MCF 10A (cell line): ENCODE measurements at regions of chr6 and their contacts with region 1.

Region 1: DNA sequence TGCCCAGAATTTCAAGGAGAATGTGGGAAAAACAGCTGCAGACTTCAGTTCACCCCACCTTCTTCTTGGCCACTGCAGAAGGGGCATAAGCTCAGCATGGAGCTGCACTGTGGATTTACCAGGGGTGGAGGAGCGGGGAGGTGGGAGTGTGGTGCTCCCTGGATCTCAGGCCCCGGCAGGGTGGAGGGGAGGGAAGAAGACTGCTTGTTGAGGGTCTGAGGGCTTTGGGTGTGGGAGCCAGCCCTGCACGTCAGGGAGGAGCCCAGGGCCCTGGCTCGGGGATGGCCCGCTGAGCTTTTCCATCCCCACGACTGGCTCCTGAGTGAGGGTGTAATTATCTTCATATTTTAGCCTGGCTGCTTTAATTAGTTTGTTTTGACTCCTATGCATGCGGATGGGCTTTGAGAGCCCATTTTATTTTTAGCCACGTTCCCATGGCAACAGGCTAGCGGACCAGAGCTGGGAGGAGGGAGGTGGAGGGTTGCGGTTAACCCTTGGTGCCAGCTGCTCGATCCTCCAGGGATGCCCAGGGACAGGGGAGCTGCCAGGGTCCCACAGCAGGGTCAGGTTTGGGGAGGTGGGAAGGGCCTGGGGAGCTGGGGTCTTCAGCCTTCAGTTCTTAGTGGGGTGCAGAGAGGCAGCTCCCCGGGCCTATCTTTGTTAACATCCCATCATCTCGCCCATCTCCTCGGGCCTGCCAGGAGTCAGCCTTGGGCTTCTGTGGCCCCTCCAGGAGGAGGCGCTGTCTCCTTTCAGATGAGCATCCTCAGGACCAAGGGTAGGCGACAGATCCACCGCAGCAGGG is 68.2 kb downstream of the RAB44 start:
- DNase-seq: peak; percentile 83
- H3K4me3 Mint-ChIP-seq: no peak overlapping the region
- H3K27ac Mint-ChIP-seq: no peak overlapping the region
- H3K4me1 Mint-ChIP-seq: peaks cover 17% of the 10 kb centered on the region
- H3K27me3 Mint-ChIP-seq: no peaks in the 10 kb centered on the region
- CTCF ChIP-seq: peak; percentile 84

Region 2: DNA sequence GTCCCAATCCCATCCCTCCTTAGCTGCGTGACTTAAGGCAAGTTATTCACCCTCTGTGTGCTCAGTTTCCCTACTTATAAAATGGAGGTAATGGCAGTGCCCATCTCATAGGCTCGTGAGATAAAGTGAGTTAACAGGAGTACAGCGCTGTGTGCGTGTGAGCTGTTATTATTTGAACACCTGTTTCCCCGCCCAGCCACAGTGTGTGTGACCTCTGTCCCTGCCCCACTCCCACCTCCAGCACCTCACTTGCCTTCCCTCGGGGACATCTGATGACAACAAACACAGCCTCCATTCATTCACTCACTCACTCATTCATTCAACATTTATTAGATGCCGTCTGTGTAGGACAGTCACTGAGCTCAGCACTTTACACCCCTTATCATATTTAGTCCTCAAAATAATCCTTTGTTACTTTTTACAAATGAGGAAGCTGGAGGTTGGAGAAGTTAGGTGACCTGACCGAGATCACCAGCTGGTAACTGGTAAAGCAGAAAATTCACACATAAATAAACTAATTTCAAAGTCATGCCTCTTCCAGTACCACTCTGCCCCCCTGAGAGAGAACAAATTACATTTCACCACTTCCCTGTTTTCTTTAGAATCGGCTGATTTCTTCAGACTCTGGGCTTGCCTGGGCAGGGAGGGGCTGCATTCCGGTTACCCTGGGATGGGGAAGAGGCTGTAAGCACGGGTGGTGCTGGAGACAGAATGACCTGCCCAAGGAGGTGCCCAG is 14.8 kb after region 1 on chr6:
- CTCF ChIA-PET with region 1: interaction called, 9 read pairs
- POLR2A ChIA-PET with region 1: no interaction called
- intact Hi-C with region 1: loop called (anchors 1 kb)
- DNase-seq: no peak
- H3K4me3 Mint-ChIP-seq: no peak overlapping the region
- H3K27ac Mint-ChIP-seq: no peak overlapping the region
- H3K4me1 Mint-ChIP-seq: no peaks in the 10 kb centered on the region
- H3K27me3 Mint-ChIP-seq: peaks cover 22% of the 10 kb centered on the region
- CTCF ChIP-seq: no peak

Region 3: DNA sequence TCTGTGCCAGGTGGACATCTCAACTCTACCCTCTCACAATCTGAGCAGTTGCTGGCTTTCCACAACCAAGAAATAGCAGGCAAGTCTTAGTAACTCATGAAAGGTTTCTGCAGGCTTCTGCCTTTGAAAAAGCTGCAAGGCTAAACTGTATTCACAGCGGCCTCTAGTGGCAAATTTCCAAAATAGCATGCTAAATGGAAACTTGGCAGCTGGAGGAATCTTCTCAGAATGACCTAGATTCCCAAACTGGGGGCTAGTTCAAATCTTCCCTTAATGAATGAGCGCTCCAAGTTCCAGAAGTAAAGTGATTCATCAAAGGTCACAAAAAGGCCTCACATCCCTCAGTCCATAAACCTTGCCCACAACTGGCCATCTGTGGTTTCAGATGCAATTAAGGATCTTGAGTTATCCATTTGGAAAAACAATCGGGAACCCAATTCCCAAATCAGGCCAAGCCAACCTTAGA is 85.4 kb after region 1 on chr6:
- CTCF ChIA-PET with region 1: interaction called, 64 read pairs
- POLR2A ChIA-PET with region 1: interaction called, 3 read pairs
- intact Hi-C with region 1: loop called (anchors 1 kb)
- DNase-seq: peak; percentile 74
- H3K4me3 Mint-ChIP-seq: no peak overlapping the region
- H3K27ac Mint-ChIP-seq: no peak overlapping the region
- H3K4me1 Mint-ChIP-seq: peaks cover 17% of the 10 kb centered on the region
- H3K27me3 Mint-ChIP-seq: no peaks in the 10 kb centered on the region
- CTCF ChIP-seq: peak; percentile 83

Region 4: DNA sequence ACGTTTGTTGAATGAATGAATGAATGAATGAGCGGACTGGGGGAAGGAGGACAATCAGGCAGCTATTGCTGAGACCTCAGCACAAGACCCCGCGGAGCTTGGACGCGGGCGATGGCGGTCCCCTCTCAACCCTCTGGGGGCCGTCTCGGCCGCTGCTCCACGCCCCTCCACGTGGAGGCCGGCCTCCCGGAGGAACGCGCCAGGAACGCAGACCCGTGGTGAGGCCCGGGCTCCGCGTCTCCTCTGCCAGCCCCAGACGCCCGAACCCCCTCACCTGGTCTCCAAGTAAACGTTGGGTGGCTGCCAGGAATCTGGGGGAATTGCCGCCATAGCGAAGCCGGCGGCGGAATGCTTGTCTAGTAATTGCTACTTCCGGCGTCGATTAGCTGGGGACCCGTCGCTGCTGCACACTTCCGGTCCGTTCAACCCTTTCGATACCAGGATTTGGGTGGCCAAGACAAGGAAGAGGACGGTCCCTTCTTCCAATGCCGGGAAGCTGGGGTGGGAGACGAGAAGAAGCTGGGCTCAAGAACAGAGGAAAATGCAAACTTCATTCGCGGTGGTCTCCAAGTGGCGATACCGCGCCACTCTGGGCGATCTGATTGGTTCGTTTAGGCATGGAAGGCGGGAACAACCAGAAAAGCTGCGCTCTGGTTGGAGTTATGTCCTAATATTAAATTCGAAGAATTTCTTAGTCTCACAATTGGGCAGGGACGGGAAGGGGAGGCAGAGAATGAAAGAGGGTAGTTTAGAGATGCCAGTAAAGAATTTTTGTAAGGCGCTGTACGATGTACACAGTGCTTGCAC is 108.8 kb after region 1 on chr6 and contains the start of gene PPIL1:
- CTCF ChIA-PET with region 1: interaction called, 4 read pairs
- POLR2A ChIA-PET with region 1: no interaction called
- intact Hi-C with region 1: loop called (anchors 1 kb)
- DNase-seq: peak; percentile 90
- H3K4me3 Mint-ChIP-seq: peak within 1 kb of the TSS; percentile 88
- H3K27ac Mint-ChIP-seq: peak within 1 kb of the TSS; percentile 95
- H3K4me1 Mint-ChIP-seq: peaks cover 14% of the 10 kb centered on the region
- H3K27me3 Mint-ChIP-seq: no peaks in the 10 kb centered on the region
- CTCF ChIP-seq: no peak
- total RNA-seq, gene PPIL1: 53.6 and 54.9 TPM in 2 replicates

Region 5: DNA sequence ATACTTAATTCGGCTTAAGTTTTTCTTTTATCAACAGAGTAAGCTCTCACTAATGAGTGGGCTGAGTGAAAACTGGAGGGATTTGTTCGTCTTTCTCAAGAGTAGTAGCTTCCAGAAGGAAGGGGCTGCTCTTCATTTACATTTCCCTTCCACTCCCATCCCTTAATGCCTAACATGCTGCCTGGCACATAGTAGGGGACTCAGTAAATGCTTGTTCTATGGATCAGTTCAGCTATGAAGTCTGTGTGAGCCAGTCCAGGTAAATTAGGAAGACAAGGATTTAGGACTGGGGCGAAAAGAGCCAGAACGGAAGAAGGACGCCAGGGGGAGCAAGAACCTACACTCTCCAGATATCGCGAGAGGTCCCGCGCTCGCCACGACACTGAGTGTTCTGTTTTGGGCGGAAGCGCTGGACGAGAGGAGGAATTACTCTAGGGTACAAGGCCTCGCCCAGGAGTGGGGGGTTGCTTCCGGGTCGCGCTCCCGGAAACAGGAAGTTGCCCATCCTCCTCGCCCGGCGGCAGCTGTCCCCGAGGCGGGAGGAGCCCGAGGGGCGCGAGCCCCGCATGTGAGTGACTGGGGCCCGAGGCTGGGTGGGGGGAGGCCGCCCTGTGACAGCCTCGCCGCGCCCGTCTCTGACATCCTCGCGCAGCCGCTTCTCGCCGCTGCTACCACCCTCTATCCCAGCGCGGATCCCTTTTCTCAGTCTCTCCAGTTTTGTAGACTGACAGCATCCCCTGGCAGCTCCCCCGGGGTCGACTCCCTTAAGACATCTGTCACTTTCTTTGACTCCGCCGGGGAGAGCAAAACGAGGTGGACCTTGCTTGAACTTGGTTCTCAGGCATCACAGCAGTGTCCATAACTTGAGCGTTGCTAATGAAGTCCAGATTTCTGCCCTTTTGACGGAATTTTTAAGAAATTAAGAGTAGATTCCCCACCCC is 119.9 kb after region 1 on chr6 and contains the start of gene C6orf89:
- CTCF ChIA-PET with region 1: no interaction called
- POLR2A ChIA-PET with region 1: no interaction called
- intact Hi-C with region 1: loop called (anchors 1 kb)
- DNase-seq: peak; percentile 99
- H3K4me3 Mint-ChIP-seq: peak within 1 kb of the TSS; percentile 80
- H3K27ac Mint-ChIP-seq: peak within 1 kb of the TSS; percentile 88
- H3K4me1 Mint-ChIP-seq: peaks cover 16% of the 10 kb centered on the region
- H3K27me3 Mint-ChIP-seq: no peaks in the 10 kb centered on the region
- CTCF ChIP-seq: peak; percentile 63
- total RNA-seq, gene C6orf89: 36.9 and 43.1 TPM in 2 replicates

Region 6: GRCh38 chr6:36912586-36912985 is 146.8 kb after region 1 on chr6:
- CTCF ChIA-PET with region 1: interaction called, 3 read pairs
- POLR2A ChIA-PET with region 1: no interaction called
- intact Hi-C with region 1: loop called (anchors 1 kb)
- DNase-seq: peak; percentile 76
- H3K4me3 Mint-ChIP-seq: no peak overlapping the region
- H3K27ac Mint-ChIP-seq: no peak overlapping the region
- H3K4me1 Mint-ChIP-seq: peaks cover 27% of the 10 kb centered on the region
- H3K27me3 Mint-ChIP-seq: no peaks in the 10 kb centered on the region
- CTCF ChIP-seq: no peak

Region 7: DNA sequence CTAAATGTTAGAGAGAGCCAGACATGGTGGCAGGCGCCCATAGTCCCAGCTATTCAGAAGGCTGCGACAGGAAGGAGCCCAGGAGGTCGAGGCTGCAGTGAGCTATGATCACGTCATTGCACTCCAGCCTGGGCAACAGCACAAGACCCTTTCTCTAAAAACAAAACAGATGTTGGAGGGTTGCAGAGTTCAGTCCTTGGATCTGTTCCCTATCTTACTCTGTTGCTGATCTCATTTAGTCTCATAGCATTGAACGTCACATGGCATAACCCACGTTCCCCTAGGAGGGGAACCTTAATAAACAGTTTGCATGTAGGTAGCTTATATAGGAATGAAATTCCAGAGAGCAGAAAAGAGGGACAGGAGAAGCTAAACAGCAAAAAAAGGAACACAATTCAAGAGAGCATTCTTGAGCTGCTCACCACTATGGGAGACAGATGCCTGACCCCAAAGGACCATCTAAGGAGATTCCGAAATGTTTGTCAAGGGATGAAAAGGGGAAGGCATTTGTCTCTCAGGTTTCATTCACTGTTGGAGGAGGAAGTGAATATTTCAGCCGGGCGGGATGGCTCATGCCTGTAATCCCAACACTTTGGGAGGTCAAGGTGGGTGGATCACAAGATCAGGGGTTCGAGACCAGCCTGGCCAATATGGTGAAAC is 349.6 kb after region 1 on chr6:
- CTCF ChIA-PET with region 1: no interaction called
- POLR2A ChIA-PET with region 1: no interaction called
- intact Hi-C with region 1: no loop called
- DNase-seq: no peak
- H3K4me3 Mint-ChIP-seq: no peak overlapping the region
- H3K27ac Mint-ChIP-seq: no peak overlapping the region
- H3K4me1 Mint-ChIP-seq: no peaks in the 10 kb centered on the region
- H3K27me3 Mint-ChIP-seq: no peaks in the 10 kb centered on the region
- CTCF ChIP-seq: no peak

Region 8: DNA sequence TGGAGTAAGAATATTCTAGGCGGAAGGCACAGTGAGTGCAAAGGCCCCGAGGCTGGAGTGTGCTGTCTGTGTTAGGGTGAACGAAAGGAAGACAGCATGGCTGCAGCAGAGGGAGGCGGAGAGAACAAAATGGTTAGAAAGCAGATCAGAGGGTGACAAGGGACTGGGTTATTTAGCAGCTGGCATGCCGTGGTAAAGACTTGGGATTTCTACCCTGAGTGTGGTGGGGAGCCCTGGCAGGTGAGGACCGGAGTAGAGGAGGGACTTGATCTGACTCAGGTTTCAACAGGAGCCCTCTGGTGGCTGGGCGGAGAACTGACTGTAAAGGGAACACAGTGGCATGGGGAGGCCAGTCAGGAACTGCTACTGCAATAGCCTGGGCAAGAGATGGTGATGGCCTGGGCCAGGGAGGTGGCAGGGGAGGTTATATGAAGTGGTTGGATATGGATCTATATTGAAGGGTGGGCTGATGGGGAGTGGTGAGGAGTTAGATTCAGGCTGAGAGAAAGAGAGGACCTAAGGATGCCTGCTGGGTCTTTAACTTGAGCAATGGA is 442.2 kb after region 1 on chr6:
- CTCF ChIA-PET with region 1: no interaction called
- POLR2A ChIA-PET with region 1: no interaction called
- intact Hi-C with region 1: loop called (anchors 1 kb)
- DNase-seq: peak; percentile 87
- H3K4me3 Mint-ChIP-seq: no peak overlapping the region
- H3K27ac Mint-ChIP-seq: no peak overlapping the region
- H3K4me1 Mint-ChIP-seq: peaks cover 7% of the 10 kb centered on the region
- H3K27me3 Mint-ChIP-seq: no peaks in the 10 kb centered on the region
- CTCF ChIP-seq: peak; percentile 60